A673 (cell line): ENCODE measurements at regions of chr16 and their contacts with region 1.

Region 1: DNA sequence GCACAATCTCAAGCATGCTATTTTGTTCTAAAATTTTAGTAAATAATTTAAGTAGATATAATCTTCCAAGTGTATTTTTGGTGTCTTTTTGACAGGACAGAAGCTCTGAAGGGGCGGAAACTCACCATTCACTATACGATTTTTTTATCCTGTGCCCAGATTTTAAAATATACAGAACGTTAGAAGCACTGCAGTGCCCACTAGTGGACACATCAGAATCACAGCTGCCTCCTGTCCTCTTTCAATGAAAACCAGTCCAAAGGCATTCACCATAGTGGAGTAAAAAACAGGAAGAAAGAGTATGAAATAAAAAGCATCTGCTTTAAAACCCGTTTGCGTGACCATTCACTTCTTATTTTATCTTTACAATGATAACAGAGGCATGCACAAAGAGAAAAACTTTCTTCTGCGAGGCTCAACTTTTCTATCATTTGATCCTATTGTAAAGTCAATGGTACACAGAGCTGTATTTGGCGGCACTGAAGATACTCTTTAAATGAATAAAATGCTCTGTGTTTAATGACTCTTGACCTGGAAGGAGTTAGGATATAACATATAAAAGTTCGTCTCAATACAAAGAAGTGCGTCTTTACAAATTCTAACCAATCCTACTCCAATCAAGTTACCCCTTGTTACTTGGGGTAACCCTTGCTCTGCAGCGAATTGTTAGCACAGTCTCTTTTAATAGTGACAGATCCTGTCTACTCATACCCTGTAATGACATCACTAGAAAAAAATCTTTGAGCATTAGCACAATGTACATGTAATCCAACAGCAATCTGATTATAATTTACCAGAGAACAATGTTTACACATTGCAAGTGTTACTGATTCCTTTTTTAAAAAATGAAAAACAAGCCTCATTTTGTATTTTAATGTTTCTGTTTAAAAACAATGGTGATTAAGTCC is 339.8 kb upstream of the PSMD7 start:
- DNase-seq: peak; percentile 68
- H3K4me3 ChIP-seq: no peak overlapping the region
- H3K27ac ChIP-seq: no peak overlapping the region
- H3K4me1 ChIP-seq: no peaks in the 10 kb centered on the region
- H3K27me3 ChIP-seq: peaks cover 43% of the 10 kb centered on the region
- CTCF ChIP-seq: peak; percentile 86

Region 2: GRCh38 chr16:72501739-72502593 is 1454.9 kb before region 1 on chr16:
- CTCF ChIA-PET with region 1: no interaction called
- POLR2A ChIA-PET with region 1: no interaction called
- intact Hi-C with region 1: loop called (anchors 10 kb)
- DNase-seq: peak; percentile 79
- H3K4me3 ChIP-seq: no peak overlapping the region
- H3K27ac ChIP-seq: no peak overlapping the region
- H3K4me1 ChIP-seq: no peaks in the 10 kb centered on the region
- H3K27me3 ChIP-seq: no peaks in the 10 kb centered on the region
- CTCF ChIP-seq: peak; percentile 89

Region 3: GRCh38 chr16:74107795-74108618 is 151.2 kb after region 1 on chr16:
- CTCF ChIA-PET with region 1: no interaction called
- POLR2A ChIA-PET with region 1: no interaction called
- intact Hi-C with region 1: loop called (anchors 10 kb)
- DNase-seq: peak; percentile 79
- H3K4me3 ChIP-seq: peak overlapping the region; percentile 21
- H3K27ac ChIP-seq: no peak overlapping the region
- H3K4me1 ChIP-seq: peaks cover 6% of the 10 kb centered on the region
- H3K27me3 ChIP-seq: no peaks in the 10 kb centered on the region
- CTCF ChIP-seq: peak; percentile 86

Region 4: DNA sequence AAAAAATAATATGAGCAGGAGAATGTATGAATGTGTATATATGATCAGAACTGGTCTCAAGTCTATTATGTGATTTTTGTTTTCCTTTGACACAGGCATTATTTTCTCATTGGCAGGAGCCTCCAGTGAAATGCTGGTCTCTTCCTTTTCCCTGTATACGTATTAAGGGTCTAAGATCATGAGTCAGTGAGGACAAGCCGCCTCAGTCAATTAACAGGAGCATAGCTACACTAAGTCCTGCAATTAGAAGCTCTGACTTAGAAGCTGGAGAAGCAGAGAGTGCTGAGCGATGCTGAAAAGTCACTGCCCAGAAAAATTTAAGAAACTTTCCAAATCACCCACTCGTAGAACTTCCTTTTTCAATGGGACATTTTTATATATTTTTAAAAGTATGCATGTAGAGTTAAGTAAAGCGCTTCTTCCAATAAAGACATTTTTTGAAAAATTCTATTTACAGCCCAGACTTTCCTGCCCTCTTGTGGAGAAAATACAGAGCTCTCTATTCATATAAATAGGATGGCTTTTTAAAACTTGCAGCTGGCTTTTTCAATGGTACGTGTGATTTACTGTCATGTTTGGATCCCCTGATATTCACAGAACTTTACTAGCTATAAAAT is 269.6 kb after region 1 on chr16:
- CTCF ChIA-PET with region 1: interaction called, 5 read pairs
- POLR2A ChIA-PET with region 1: no interaction called
- intact Hi-C with region 1: loop called (anchors 5 kb)
- DNase-seq: peak; percentile 62
- H3K4me3 ChIP-seq: no peak overlapping the region
- H3K27ac ChIP-seq: no peak overlapping the region
- H3K4me1 ChIP-seq: peaks cover 9% of the 10 kb centered on the region
- H3K27me3 ChIP-seq: no peaks in the 10 kb centered on the region
- CTCF ChIP-seq: peak; percentile 79

Region 5: GRCh38 chr16:74275002-74275636 is 318.3 kb after region 1 on chr16:
- CTCF ChIA-PET with region 1: no interaction called
- POLR2A ChIA-PET with region 1: no interaction called
- intact Hi-C with region 1: loop called (anchors 5 kb)
- DNase-seq: peak; percentile 62
- H3K4me3 ChIP-seq: no peak overlapping the region
- H3K27ac ChIP-seq: no peak overlapping the region
- H3K4me1 ChIP-seq: no peaks in the 10 kb centered on the region
- H3K27me3 ChIP-seq: no peaks in the 10 kb centered on the region
- CTCF ChIP-seq: peak; percentile 73